ENCODE measurements at regions of chr19 and their contacts with region 1.

Region 1: DNA sequence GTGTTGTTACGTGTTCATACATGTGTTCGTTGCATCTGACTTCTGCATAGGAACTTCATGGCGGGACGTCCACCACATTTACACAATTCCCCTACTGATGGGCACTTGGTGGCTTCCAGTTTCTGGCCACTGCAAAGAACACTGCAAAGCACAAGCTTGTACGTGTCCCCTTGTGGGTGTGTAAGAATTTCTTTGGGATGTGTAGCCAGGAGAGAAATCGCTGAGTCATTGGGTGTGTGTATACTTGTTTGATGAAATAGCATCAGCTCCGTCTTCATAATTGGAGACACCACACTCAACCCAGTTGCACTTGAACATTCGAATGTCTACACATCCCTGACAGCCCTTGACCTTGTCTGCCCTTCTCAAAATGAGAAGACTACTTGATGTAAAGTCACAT is 19.2 kb downstream of the KLK5 start:
- DNase-seq: no peak
- ATAC-seq: no peak
- H3K4me3 ChIP-seq: no peak overlapping the region
- H3K4me3 Mint-ChIP-seq: no peak overlapping the region
- H3K27ac ChIP-seq: no peak overlapping the region
- H3K27ac Mint-ChIP-seq: no peak overlapping the region
- H3K4me1 ChIP-seq: no peaks in the 10 kb centered on the region
- H3K4me1 Mint-ChIP-seq: peaks cover 2% of the 10 kb centered on the region
- H3K27me3 ChIP-seq: no peaks in the 10 kb centered on the region
- H3K27me3 Mint-ChIP-seq: peaks cover 33% of the 10 kb centered on the region
- CTCF ChIP-seq: no peak

Region 2: DNA sequence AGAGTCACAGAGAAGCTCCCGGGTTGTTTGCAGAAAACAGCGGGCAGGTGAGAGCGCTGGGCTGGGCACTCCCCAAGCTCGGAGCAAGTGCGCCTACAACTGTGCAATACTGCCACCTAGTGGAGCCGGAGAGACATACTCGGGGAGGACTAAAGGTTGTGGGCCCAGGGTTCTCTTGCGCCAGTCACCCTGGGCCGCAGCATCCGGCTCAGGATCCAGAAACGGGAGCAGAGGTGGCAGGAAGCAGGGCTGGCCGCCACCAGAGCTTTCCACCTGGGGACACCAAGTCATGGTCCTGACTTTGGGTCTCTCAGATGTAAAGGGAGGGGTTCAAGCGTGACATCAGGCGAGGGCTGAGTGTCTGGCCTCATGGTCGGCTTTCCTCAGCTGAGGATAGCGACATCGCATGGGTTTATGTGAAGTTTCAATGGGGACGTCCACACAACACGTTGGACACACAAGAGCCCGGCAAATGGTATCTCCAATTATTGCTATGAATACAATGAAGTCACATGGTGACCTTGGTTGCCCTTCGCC is 11.3 kb before region 1 on chr19:
- CTCF ChIA-PET with region 1: interaction called, 22 read pairs
- POLR2A ChIA-PET with region 1: no interaction called
- intact Hi-C with region 1: no loop called
- DNase-seq: peak; percentile 39 to 86 (median 73)
- ATAC-seq: peak; percentile 84
- H3K4me3 ChIP-seq: no peak overlapping the region
- H3K4me3 Mint-ChIP-seq: no peak overlapping the region
- H3K27ac ChIP-seq: no peak overlapping the region
- H3K27ac Mint-ChIP-seq: no peak overlapping the region
- H3K4me1 ChIP-seq: no peaks in the 10 kb centered on the region
- H3K4me1 Mint-ChIP-seq: peaks cover 4% of the 10 kb centered on the region
- H3K27me3 ChIP-seq: no peaks in the 10 kb centered on the region
- H3K27me3 Mint-ChIP-seq: peaks cover 35% of the 10 kb centered on the region
- CTCF ChIP-seq: peak; percentile 87

Region 3: GRCh38 chr19:51097166-51097738 is 163.6 kb after region 1 on chr19:
- CTCF ChIA-PET with region 1: no interaction called
- POLR2A ChIA-PET with region 1: no interaction called
- intact Hi-C with region 1: loop called in 1 of 2 experiments (anchors 2 kb)
- DNase-seq: peak; percentile 44 to 82 (median 71)
- ATAC-seq: peak; percentile 27
- H3K4me3 ChIP-seq: no peak overlapping the region
- H3K4me3 Mint-ChIP-seq: peak overlapping the region; percentile 38
- H3K27ac ChIP-seq: peak overlapping the region; percentile 23 to 53
- H3K27ac Mint-ChIP-seq: peak overlapping the region; percentile 79
- H3K4me1 ChIP-seq: peaks cover 21% of the 10 kb centered on the region
- H3K4me1 Mint-ChIP-seq: peaks cover 28% of the 10 kb centered on the region
- H3K27me3 ChIP-seq: no peaks in the 10 kb centered on the region
- H3K27me3 Mint-ChIP-seq: no peaks in the 10 kb centered on the region
- CTCF ChIP-seq: peak; percentile 51

Region 4: GRCh38 chr19:51168564-51169282 is 235.1 kb after region 1 on chr19:
- CTCF ChIA-PET with region 1: interaction called, 3 read pairs
- POLR2A ChIA-PET with region 1: no interaction called
- intact Hi-C with region 1: loop called in 1 of 2 experiments (anchors 1 kb)
- DNase-seq: no peak
- ATAC-seq: no peak
- H3K4me3 ChIP-seq: no peak overlapping the region
- H3K4me3 Mint-ChIP-seq: no peak overlapping the region
- H3K27ac ChIP-seq: no peak overlapping the region
- H3K27ac Mint-ChIP-seq: no peak overlapping the region
- H3K4me1 ChIP-seq: peaks cover 27% of the 10 kb centered on the region
- H3K4me1 Mint-ChIP-seq: peaks cover 28% of the 10 kb centered on the region
- H3K27me3 ChIP-seq: no peaks in the 10 kb centered on the region
- H3K27me3 Mint-ChIP-seq: no peaks in the 10 kb centered on the region
- CTCF ChIP-seq: no peak